ENCODE measurements at regions of chr12 and their contacts with region 1.

Region 1: GRCh38 chr12:8648576-8649205 is 13.9 kb downstream of the MFAP5 start:
- DNase-seq: peak; percentile 91
- ATAC-seq: peak; percentile 82
- H3K4me3 Mint-ChIP-seq: no peak overlapping the region
- H3K27ac Mint-ChIP-seq: peak overlapping the region; percentile 48
- H3K4me1 Mint-ChIP-seq: peaks cover 41% of the 10 kb centered on the region
- H3K27me3 Mint-ChIP-seq: peaks cover 84% of the 10 kb centered on the region

Region 2: GRCh38 chr12:8662593-8662992 is 13.9 kb after region 1 on chr12 and contains the start of gene MFAP5:
- CTCF ChIA-PET with region 1: interaction called, 10 read pairs
- DNase-seq: no peak
- ATAC-seq: no peak
- H3K4me3 Mint-ChIP-seq: no peak within 1 kb of the TSS
- H3K27ac Mint-ChIP-seq: no peak within 1 kb of the TSS
- H3K4me1 Mint-ChIP-seq: no peaks in the 10 kb centered on the region
- H3K27me3 Mint-ChIP-seq: peaks cover 12% of the 10 kb centered on the region
- total RNA-seq, gene MFAP5: not detected

Measured in activated CD8-positive, alpha-beta memory T cell treated with anti-CD3 and anti-CD28 coated beads, Interleukin-2, amount 10 ng/mL, durations not matched to agents 7 days and 5 days (primary cell).